ENCODE measurements at regions of chr11 and their contacts with region 1.

Region 1: DNA sequence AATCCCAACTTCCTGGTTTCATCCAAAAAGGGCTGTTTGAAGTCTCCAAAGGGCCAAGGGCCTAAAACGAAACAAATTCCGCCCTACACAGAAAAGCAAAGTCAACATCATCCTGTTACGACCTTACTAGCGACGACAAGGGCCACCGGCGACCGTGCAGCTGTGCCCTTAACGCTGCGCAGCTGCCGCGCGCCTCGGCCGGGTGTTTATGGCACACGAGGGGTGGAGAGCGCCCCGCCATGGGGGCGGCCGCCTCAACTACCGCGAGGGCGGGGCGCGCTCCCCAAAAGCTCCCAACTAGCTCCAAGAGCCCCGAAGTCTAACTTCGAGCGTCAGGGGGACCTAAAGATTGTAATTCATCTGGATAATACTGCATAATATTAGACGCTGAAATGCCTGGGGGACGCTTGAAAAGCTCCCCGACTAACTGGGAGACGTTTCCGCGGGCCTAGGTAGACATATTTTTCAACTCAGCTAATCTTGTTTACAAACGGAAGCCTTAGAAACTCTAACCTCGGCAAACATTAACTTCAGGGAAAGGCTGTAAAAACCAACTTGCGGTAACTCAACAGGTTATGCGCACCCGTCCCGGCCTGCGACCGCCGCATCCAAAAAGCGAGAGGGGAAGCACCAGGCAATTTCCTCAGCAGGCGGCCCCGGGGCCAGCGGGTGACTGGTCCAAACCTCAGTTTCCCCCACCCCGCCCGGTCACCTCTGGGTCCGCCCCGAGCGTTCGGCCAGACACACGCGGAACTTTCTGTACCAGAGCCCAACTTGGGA is 694 bp downstream of the TMEM123 start:
- DNase-seq: peak; percentile 96
- ATAC-seq: peak; percentile 83
- H3K4me3 ChIP-seq: peak overlapping the region; percentile 87 to 95 (median 91)
- H3K27ac ChIP-seq: peak overlapping the region; percentile 96
- H3K4me1 ChIP-seq: peaks cover 71% of the 10 kb centered on the region
- H3K27me3 ChIP-seq: no peaks in the 10 kb centered on the region; a peak in 1 of 5 replicates
- CTCF ChIP-seq: peak; percentile 52
- EP300 ChIP-seq: peak in 1 of 2 experiments; percentile 85; a peak in 1 of 4 replicates
- POLR2A ChIP-seq: peak; percentile 49 to 82
- RAD21 ChIP-seq: 0 out of 2 replicates have a peak, but pooled peaks have one; percentile 13

Region 2: DNA sequence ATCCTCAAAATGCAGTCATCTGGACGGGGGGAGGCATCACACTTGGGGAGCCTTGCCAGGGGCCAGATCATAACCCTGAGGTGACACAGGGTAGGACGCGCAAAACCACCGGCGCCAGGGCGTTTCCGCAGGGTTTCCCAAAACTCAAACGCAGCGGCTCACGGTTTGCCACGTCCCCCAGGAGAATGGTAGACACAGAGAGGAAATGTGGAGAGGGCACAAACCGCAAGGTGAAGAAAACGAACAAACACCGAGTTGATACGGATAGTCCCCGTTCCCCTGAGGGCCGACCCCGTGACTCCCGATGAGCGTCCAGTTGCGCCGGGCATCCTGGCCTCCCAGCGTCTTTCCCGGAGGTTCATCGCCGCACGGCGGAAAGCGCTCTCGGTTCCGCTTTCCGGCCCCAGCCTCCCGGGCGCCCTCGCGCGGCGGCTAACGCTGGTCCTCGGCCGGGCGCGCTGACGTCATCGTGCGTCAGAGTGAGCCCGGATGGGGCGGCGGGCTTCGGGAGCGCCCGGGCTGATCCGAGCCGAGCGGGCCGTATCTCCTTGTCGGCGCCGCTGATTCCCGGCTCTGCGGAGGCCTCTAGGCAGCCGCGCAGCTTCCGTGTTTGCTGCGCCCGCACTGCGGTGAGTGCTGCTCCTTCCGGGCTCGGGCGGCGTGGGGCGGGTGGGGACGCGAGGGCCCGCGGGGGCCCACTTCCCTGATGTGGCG is 105.0 kb before region 1 on chr11 and contains the start of gene BIRC2:
- CTCF ChIA-PET with region 1: no interaction called
- POLR2A ChIA-PET with region 1: interaction called, 3 read pairs
- in situ Hi-C with region 1: no loop called
- intact Hi-C with region 1: loop called (anchors 2 kb)
- DNase-seq: peak; percentile 79
- ATAC-seq: peak; percentile 96
- H3K4me3 ChIP-seq: peak within 1 kb of the TSS; percentile 85 to 98 (median 96)
- H3K27ac ChIP-seq: peak within 1 kb of the TSS; percentile 96
- H3K4me1 ChIP-seq: peaks cover 30% of the 10 kb centered on the region
- H3K27me3 ChIP-seq: no peaks in the 10 kb centered on the region; a peak in 1 of 5 replicates
- CTCF ChIP-seq: peak; percentile 95
- EP300 ChIP-seq: peak; percentile 16 to 38; a peak in 1 of 4 replicates
- POLR2A ChIP-seq: peak; percentile 78 to 82
- RAD21 ChIP-seq: peak; percentile 78
- total RNA-seq, gene BIRC2: 61.7 and 83.2 TPM in 2 replicates

Region 3: GRCh38 chr11:102390667-102391465 is 61.0 kb before region 1 on chr11:
- CTCF ChIA-PET with region 1: interaction called, 4 read pairs
- POLR2A ChIA-PET with region 1: no interaction called
- in situ Hi-C with region 1: no loop called
- intact Hi-C with region 1: loop called (anchors 5 kb)
- DNase-seq: peak; percentile 70
- ATAC-seq: peak; percentile 84
- H3K4me3 ChIP-seq: no peak overlapping the region
- H3K27ac ChIP-seq: no peak overlapping the region
- H3K4me1 ChIP-seq: no peaks in the 10 kb centered on the region; the same call in 1 of the 2 replicates
- H3K27me3 ChIP-seq: no peaks in the 10 kb centered on the region
- CTCF ChIP-seq: peak; percentile 92
- EP300 ChIP-seq: no peak
- POLR2A ChIP-seq: no peak
- RAD21 ChIP-seq: peak; percentile 78

Region 4: GRCh38 chr11:102410382-102410784 is 41.5 kb before region 1 on chr11:
- CTCF ChIA-PET with region 1: no interaction called
- POLR2A ChIA-PET with region 1: interaction called, 4 read pairs
- in situ Hi-C with region 1: no loop called
- intact Hi-C with region 1: loop called (anchors 5 kb)
- DNase-seq: no peak
- ATAC-seq: no peak; the same call in 2 of the 3 replicates
- H3K4me3 ChIP-seq: no peak overlapping the region
- H3K27ac ChIP-seq: no peak overlapping the region
- H3K4me1 ChIP-seq: peaks cover 61% of the 10 kb centered on the region
- H3K27me3 ChIP-seq: no peaks in the 10 kb centered on the region
- CTCF ChIP-seq: no peak
- EP300 ChIP-seq: no peak
- POLR2A ChIP-seq: no peak
- RAD21 ChIP-seq: no peak

Region 5: DNA sequence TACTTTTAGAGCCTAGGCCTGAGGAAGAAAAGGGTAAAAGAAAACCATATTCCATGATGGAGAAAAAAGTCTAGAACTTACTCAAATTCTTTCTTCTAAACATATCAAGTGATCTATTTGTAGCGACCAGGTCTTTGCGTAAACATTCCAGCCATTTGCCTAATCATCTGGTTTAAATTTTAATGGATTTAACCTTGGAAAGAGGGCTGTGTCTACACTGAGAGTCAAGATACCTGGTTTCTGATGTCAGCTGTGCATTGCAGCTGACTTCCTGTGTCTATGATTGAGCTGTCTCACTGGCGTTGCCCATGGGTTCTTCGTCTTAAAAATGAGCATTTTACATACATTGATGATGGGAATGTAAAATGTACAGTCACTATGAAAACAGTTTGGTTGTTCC is 10.7 kb after region 1 on chr11:
- CTCF ChIA-PET with region 1: no interaction called
- POLR2A ChIA-PET with region 1: interaction called, 22 read pairs
- in situ Hi-C with region 1: no loop called
- intact Hi-C with region 1: no loop called
- DNase-seq: peak; percentile 94
- ATAC-seq: peak; percentile 92
- H3K4me3 ChIP-seq: peak overlapping the region in 2 of 3 experiments; percentile 5 to 18; a peak in 2 of 6 replicates
- H3K27ac ChIP-seq: peak overlapping the region; percentile 93
- H3K4me1 ChIP-seq: peaks cover 95% of the 10 kb centered on the region
- H3K27me3 ChIP-seq: no peaks in the 10 kb centered on the region
- CTCF ChIP-seq: no peak
- EP300 ChIP-seq: peak; percentile 72 to 91; a peak in 3 of 4 replicates
- POLR2A ChIP-seq: 0 out of 4 replicates have a peak, but pooled peaks of 1 of the 2 experiments have one; percentile 18
- RAD21 ChIP-seq: no peak

Region 6: DNA sequence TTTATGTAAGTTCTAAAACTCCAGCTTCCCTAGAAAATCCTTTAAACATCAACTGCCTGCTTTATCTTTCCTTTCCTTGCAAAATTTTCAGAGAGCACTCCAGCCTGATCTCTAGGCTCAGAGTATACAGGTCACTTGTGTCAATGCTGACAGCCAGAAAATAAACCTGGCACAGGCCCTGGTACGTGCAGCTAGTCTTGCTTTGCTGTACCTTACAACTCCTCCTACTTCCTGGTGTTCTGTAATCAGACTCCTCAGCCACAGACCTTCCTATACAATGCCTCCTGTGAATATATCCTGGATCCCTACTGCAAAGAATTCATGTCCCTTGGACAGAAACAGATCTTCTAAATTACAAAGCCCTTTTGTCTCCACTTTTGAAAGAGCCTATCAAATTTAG is 24.9 kb after region 1 on chr11:
- CTCF ChIA-PET with region 1: no interaction called
- POLR2A ChIA-PET with region 1: interaction called, 10 read pairs
- in situ Hi-C with region 1: no loop called
- intact Hi-C with region 1: no loop called
- DNase-seq: peak; percentile 95
- ATAC-seq: peak; percentile 100
- H3K4me3 ChIP-seq: peak overlapping the region in 2 of 3 experiments; percentile 32 to 38; a peak in 1 of 6 replicates
- H3K27ac ChIP-seq: peak overlapping the region; percentile 79
- H3K4me1 ChIP-seq: peaks cover 65% of the 10 kb centered on the region
- H3K27me3 ChIP-seq: no peaks in the 10 kb centered on the region
- CTCF ChIP-seq: no peak
- EP300 ChIP-seq: peak in 1 of 2 experiments; percentile 83; a peak in 2 of 4 replicates
- POLR2A ChIP-seq: peak in 1 of 2 experiments; percentile 56; a peak in 2 of 4 replicates
- RAD21 ChIP-seq: no peak

Region 7: DNA sequence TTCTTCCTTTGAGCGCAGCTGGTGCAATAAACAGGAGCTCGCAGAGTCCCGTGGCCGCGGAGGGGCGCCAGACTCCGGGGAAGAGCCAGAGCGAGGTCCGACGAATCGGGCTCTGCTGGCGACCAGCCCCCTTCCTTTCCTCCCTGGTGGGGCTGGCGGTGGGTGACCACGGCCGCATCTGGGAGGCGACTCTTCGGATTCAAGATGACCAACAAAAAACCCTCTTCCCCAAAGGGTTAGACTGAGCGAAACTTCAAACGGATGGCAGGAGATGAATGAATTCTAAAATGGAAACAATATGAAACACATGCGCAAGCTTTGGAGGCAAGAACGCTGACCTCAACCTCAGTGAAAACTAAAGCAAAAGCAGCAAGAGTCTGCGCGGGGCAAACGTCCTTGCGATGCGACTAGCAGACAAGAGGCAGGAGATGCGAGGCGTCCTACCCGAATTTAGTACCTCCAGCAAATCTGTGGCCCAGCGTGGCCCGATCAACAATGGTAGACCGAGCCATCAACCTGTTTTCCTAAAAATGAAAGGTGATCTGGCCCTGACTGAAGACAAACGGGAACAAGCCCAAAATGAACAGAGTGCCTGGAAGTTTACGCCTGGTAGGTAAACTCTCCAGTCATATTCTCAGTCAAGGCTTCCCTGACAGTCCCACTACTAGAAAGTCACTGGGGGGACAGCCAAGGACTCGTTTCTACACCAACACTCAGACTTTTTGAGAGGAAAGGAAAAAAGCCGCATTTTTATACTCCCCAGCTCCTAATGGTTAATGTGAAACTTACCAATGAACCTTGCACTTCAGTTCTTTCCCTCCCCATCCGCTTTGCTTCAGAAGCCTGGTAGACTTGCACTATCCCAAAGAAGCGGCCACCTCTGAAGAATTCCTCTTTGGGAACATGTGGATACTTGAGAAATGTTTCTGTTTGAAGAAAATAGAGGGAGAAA is 379.9 kb after region 1 on chr11:
- CTCF ChIA-PET with region 1: no interaction called
- POLR2A ChIA-PET with region 1: no interaction called
- in situ Hi-C with region 1: no loop called
- intact Hi-C with region 1: loop called (anchors 5 kb)
- DNase-seq: peak; percentile 5
- ATAC-seq: peak; percentile 91
- H3K4me3 ChIP-seq: peak overlapping the region; percentile 35 to 49 (median 47)
- H3K27ac ChIP-seq: no peak overlapping the region
- H3K4me1 ChIP-seq: peaks cover 13% of the 10 kb centered on the region
- H3K27me3 ChIP-seq: no peaks in the 10 kb centered on the region
- CTCF ChIP-seq: peak; percentile 80
- EP300 ChIP-seq: no peak
- POLR2A ChIP-seq: no peak
- RAD21 ChIP-seq: peak; percentile 36; the same call in 1 of the 2 replicates

Measured in HepG2 (cell line).